ENCODE measurements at regions of chr2 and their contacts with region 1.

Region 1: GRCh38 chr2:74553892-74554645 is at the start of gene LOXL3:
- DNase-seq: peak in 9 of 14 experiments; percentile 47 to 88 (median 70)
- ATAC-seq: peak; percentile 54
- H3K4me3 ChIP-seq: peak within 1 kb of the TSS; percentile 80
- H3K4me3 Mint-ChIP-seq: peak within 1 kb of the TSS; percentile 94
- H3K27ac ChIP-seq: peak within 1 kb of the TSS; percentile 51 to 75
- H3K27ac Mint-ChIP-seq: peak within 1 kb of the TSS; percentile 84
- H3K4me1 ChIP-seq: peaks cover 36% of the 10 kb centered on the region
- H3K4me1 Mint-ChIP-seq: peaks cover 12% of the 10 kb centered on the region
- H3K27me3 ChIP-seq: peaks cover 9 to 14% of the 10 kb centered on the region in 2 experiments
- H3K27me3 Mint-ChIP-seq: peaks cover 27% of the 10 kb centered on the region
- CTCF ChIP-seq: no peak
- total RNA-seq, gene LOXL3: 0.25 TPM in 1 of 2 experiments, not detected in the other

Region 2: DNA sequence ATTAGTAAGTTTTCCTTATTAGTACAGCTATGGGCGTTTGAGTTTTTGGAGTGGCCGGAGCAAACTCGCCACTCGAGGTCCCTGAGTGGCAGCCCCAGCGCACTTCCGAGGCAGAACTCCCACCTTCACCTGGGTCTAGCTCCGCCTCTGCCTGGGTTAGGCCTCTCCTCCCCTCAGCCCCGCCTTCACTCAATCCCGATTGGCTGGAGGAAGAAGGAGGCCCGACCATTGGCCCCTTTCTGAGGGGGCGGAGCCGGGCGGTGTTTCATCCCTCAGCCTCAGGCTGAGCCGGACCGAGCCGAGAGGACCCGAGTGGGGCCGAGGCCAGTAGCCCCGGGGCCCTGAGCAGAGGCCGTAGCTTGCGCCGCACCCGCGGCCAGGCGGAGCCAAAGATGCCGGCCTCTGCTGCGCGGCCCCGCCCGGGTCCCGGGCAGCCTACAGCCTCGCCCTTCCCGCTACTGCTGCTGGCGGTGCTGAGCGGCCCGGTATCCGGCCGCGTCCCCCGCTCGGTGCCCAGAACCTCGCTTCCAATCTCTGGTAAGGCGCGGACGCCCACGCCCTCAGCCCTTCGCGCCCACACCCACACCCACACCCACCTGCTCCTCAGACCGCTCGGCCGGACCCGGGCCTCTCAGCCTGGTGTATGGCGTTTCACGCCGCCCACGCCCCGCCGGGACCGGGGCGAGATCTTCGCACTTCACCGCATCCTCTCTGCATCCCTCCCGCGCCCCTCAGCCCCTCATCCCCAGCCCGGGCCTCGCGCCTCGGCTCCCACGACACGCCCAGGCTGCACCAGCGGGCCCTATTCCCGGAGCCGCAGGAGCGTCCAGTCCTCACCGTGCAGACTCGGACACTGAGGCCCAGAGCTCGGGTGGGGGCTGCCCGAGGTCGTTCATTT is 100.2 kb after region 1 on chr2 and contains the start of gene SEMA4F:
- CTCF ChIA-PET with region 1: no interaction called
- POLR2A ChIA-PET with region 1: no interaction called
- intact Hi-C with region 1: loop called in 1 of 2 experiments (anchors 10 kb)
- DNase-seq: peak; percentile 83 to 96 (median 92)
- ATAC-seq: peak; percentile 99
- H3K4me3 ChIP-seq: peak within 1 kb of the TSS; percentile 80
- H3K4me3 Mint-ChIP-seq: peak within 1 kb of the TSS; percentile 88
- H3K27ac ChIP-seq: no peak within 1 kb of the TSS
- H3K27ac Mint-ChIP-seq: peak within 1 kb of the TSS; percentile 80
- H3K4me1 ChIP-seq: peaks cover 18% of the 10 kb centered on the region
- H3K4me1 Mint-ChIP-seq: peaks cover 26% of the 10 kb centered on the region
- H3K27me3 ChIP-seq: peaks cover 2 to 5% of the 10 kb centered on the region in 2 experiments
- H3K27me3 Mint-ChIP-seq: peaks cover 14% of the 10 kb centered on the region
- CTCF ChIP-seq: no peak
- total RNA-seq, gene SEMA4F: 6.8 to 7.3 TPM

Region 3: GRCh38 chr2:74792285-74792684 is 238.2 kb after region 1 on chr2:
- CTCF ChIA-PET with region 1: no interaction called
- POLR2A ChIA-PET with region 1: no interaction called
- intact Hi-C with region 1: no loop called
- DNase-seq: no peak
- ATAC-seq: no peak
- H3K4me3 ChIP-seq: no peak overlapping the region
- H3K4me3 Mint-ChIP-seq: no peak overlapping the region
- H3K27ac ChIP-seq: no peak overlapping the region
- H3K27ac Mint-ChIP-seq: no peak overlapping the region
- H3K4me1 ChIP-seq: no peaks in the 10 kb centered on the region
- H3K4me1 Mint-ChIP-seq: no peaks in the 10 kb centered on the region
- H3K27me3 ChIP-seq: no peaks in the 10 kb centered on the region
- H3K27me3 Mint-ChIP-seq: no peaks in the 10 kb centered on the region
- CTCF ChIP-seq: no peak

Measured in CD4-positive, alpha-beta T cell (primary cell).